PC-3 (cell line): ENCODE measurements at regions of chr12 and their contacts with region 1.

Region 1: GRCh38 chr12:104049903-104050356 is at the start of gene GLT8D2:
- DNase-seq: peak; percentile 61
- ATAC-seq: peak; percentile 86
- H3K4me3 ChIP-seq: peak within 1 kb of the TSS; percentile 76
- H3K27ac ChIP-seq: no peak within 1 kb of the TSS
- H3K4me1 ChIP-seq: peaks cover 15% of the 10 kb centered on the region
- H3K27me3 ChIP-seq: no peaks in the 10 kb centered on the region
- CTCF ChIP-seq: no peak
- total RNA-seq, gene GLT8D2: 1.6 TPM in 2 replicates

Region 2: DNA sequence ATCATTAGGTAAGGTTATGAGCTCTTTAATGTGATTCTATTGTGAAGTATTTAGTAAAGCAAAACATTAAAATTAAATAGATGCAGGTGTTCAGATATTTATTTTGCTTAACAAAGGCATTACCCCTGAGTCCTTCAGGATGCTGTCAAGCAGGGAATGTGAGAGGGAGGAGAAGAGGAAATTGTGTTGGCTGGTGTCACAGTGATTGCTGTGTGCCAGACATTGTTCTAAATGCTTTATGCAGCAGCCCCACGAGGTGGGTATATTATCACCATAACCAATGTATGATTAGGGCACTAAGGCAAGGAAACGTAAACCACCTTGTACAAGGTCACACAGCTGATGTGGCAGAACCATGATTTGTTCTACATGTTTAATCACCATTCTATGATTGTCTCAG is 382.8 kb before region 1 on chr12:
- CTCF ChIA-PET with region 1: no interaction called
- POLR2A ChIA-PET with region 1: no interaction called
- intact Hi-C with region 1: no loop called
- DNase-seq: no peak
- ATAC-seq: no peak
- H3K4me3 ChIP-seq: no peak overlapping the region
- H3K27ac ChIP-seq: no peak overlapping the region
- H3K4me1 ChIP-seq: no peaks in the 10 kb centered on the region
- H3K27me3 ChIP-seq: peaks cover 49% of the 10 kb centered on the region
- CTCF ChIP-seq: no peak

Region 3: GRCh38 chr12:103884316-103884715 is 165.6 kb before region 1 on chr12:
- CTCF ChIA-PET with region 1: no interaction called
- POLR2A ChIA-PET with region 1: no interaction called
- intact Hi-C with region 1: loop called (anchors 5 kb)
- DNase-seq: peak; percentile 60
- ATAC-seq: no peak
- H3K4me3 ChIP-seq: no peak overlapping the region
- H3K27ac ChIP-seq: no peak overlapping the region
- H3K4me1 ChIP-seq: peaks cover 29% of the 10 kb centered on the region
- H3K27me3 ChIP-seq: no peaks in the 10 kb centered on the region
- CTCF ChIP-seq: peak; percentile 83

Region 4: GRCh38 chr12:103897316-103897715 is 152.6 kb before region 1 on chr12:
- CTCF ChIA-PET with region 1: no interaction called
- POLR2A ChIA-PET with region 1: no interaction called
- intact Hi-C with region 1: no loop called
- DNase-seq: no peak
- ATAC-seq: no peak
- H3K4me3 ChIP-seq: no peak overlapping the region
- H3K27ac ChIP-seq: no peak overlapping the region
- H3K4me1 ChIP-seq: no peaks in the 10 kb centered on the region; the same call in 1 of the 2 replicates
- H3K27me3 ChIP-seq: no peaks in the 10 kb centered on the region
- CTCF ChIP-seq: no peak

Region 5: DNA sequence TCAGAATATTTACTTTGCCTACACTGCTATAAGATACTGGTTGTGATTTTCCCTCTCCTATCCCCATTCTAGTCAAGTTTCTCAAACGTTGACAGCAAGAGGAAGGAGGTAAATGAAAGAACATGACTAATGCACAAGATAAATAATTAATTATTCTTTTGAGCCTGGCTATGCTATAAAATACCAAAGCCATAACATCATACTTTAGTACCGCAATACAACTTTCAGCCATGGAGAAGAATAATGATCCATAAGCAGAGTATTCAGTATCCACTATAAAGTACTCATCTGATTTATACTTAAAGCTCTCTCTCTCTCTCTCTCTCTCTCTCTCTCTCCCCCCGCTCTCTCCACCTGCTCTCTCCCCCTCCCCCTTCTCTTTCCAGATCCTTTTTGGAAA is 43.0 kb before region 1 on chr12:
- CTCF ChIA-PET with region 1: no interaction called
- POLR2A ChIA-PET with region 1: no interaction called
- intact Hi-C with region 1: loop called (anchors 1 kb)
- DNase-seq: peak; percentile 84
- ATAC-seq: peak; percentile 82
- H3K4me3 ChIP-seq: no peak overlapping the region; the same call in 1 of the 2 replicates
- H3K27ac ChIP-seq: no peak overlapping the region
- H3K4me1 ChIP-seq: peaks cover 26% of the 10 kb centered on the region
- H3K27me3 ChIP-seq: no peaks in the 10 kb centered on the region
- CTCF ChIP-seq: no peak

Region 6: GRCh38 chr12:104121001-104121400 is 71.1 kb after region 1 on chr12:
- CTCF ChIA-PET with region 1: no interaction called
- POLR2A ChIA-PET with region 1: no interaction called
- intact Hi-C with region 1: no loop called
- DNase-seq: peak; percentile 69
- ATAC-seq: peak; percentile 95
- H3K4me3 ChIP-seq: no peak overlapping the region
- H3K27ac ChIP-seq: no peak overlapping the region
- H3K4me1 ChIP-seq: peaks cover 12% of the 10 kb centered on the region
- H3K27me3 ChIP-seq: no peaks in the 10 kb centered on the region
- CTCF ChIP-seq: no peak